ENCODE measurements at regions of chr3 and their contacts with region 1.

Region 1: DNA sequence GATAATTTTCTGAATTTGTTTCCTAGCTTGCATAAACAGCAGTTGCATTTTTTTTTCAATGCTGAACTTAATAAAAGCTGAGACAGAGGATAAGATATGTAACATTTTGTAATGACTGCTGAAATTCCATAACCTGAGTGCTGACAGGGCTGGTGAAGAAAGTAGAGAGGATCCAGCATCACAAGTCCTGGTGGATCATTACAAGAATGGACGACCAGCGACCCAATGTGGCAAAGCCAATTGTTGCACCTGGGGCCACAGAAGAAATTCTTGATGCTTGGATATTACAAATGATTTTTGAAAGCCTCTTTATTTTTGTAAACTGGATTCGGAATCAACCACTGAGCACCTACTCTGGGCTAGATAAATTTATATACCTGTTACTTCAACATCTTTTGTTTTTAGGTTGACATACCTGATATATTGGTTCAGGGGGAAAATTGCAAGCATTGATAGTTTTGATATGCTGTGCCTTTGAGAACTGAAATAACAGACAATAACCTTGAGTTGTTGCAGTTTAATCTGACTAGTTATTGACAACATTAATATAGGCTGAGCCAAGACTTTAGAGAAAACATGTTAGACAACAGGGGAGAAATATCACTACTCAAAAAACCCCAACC is 3.9 kb upstream of the ACTL6A start:
- DNase-seq: peak in 4 of 5 donors; percentile 58 to 83 (median 70)
- H3K4me3 ChIP-seq: no peak overlapping the region
- H3K27ac ChIP-seq: no peak overlapping the region
- H3K4me1 ChIP-seq: peaks cover 0 to 2% (median 2%) of the 10 kb centered on the region in 3 donors
- H3K27me3 ChIP-seq: no peaks in the 10 kb centered on the region
- CTCF ChIP-seq: peak; percentile 79

Region 2: DNA sequence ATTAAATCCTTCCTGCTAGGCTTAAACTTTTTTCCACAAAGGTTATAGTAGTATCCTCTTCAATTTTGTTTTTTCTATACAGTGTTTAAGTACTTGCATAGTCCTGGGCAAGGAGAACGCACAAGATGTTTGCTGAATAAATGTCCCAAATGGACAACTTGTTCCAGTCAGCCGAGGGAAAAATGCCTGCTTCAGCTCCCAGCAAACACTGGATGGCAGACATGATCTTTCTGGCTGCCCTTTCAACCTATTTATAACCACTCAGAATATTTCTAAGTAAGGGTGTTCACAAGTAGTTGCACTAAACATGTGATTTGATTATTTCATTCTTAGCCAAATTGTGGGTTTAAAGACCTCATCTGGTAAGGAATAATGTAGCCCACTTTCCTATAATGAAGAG is 137.4 kb before region 1 on chr3:
- intact Hi-C with region 1: loop called (anchors 10 kb)
- DNase-seq: peak in 2 of 5 donors; percentile 15 to 33
- H3K4me3 ChIP-seq: no peak overlapping the region
- H3K27ac ChIP-seq: no peak overlapping the region
- H3K4me1 ChIP-seq: no peaks in the 10 kb centered on the region
- H3K27me3 ChIP-seq: no peaks in the 10 kb centered on the region
- CTCF ChIP-seq: peak; percentile 41

Region 3: GRCh38 chr3:179788996-179789395 is 230.1 kb after region 1 on chr3:
- intact Hi-C with region 1: no loop called
- DNase-seq: no peak
- H3K4me3 ChIP-seq: no peak overlapping the region
- H3K27ac ChIP-seq: no peak overlapping the region
- H3K4me1 ChIP-seq: no peaks in the 10 kb centered on the region
- H3K27me3 ChIP-seq: no peaks in the 10 kb centered on the region
- CTCF ChIP-seq: no peak

Measured in kidney (tissue), 22 donors.